Activated naive CD4-positive, alpha-beta T cell treated with anti-CD3 and anti-CD28 coated beads for 36 hours (primary cell): ENCODE measurements at regions of chr14 and their contacts with region 1.

Region 1: GRCh38 chr14:50520947-50521815 is 11.2 kb downstream of the MAP4K5 start:
- DNase-seq: peak; percentile 87
- H3K4me3 Mint-ChIP-seq: no peak overlapping the region
- H3K27ac Mint-ChIP-seq: peak overlapping the region; percentile 89
- H3K4me1 Mint-ChIP-seq: peaks cover 53% of the 10 kb centered on the region
- H3K27me3 Mint-ChIP-seq: no peaks in the 10 kb centered on the region

Region 2: DNA sequence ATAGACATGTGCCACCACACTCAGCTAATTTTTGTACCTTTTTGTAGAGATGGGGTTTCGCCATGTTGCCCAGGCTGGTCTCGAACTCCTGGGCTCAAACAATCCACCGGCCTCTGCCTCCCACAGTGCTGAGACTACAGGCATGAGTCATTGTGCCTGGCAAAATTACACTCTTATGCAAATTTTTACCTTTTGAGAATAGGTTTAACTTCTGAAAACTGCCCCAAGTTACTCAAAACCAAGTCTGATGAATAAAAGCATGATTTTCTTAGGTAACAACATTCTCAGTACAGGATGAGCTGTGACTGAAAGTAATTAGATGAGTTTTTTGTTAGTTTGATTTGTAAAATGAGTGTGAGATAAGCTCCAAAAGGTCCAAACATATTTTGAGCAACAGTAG is 1101.0 kb before region 1 on chr14:
- CTCF ChIA-PET with region 1: no interaction called
- intact Hi-C with region 1: loop called (anchors 2 kb)
- DNase-seq: peak; percentile 58
- H3K4me3 Mint-ChIP-seq: no peak overlapping the region
- H3K27ac Mint-ChIP-seq: peak overlapping the region; percentile 37
- H3K4me1 Mint-ChIP-seq: peaks cover 18% of the 10 kb centered on the region
- H3K27me3 Mint-ChIP-seq: peaks cover 41% of the 10 kb centered on the region

Region 3: GRCh38 chr14:49767562-49768300 is 753.5 kb before region 1 on chr14 and contains the start of gene KLHDC2:
- CTCF ChIA-PET with region 1: no interaction called
- intact Hi-C with region 1: loop called (anchors 5 kb)
- DNase-seq: peak; percentile 91
- H3K4me3 Mint-ChIP-seq: peak within 1 kb of the TSS; percentile 94
- H3K27ac Mint-ChIP-seq: peak within 1 kb of the TSS; percentile 99
- H3K4me1 Mint-ChIP-seq: peaks cover 34% of the 10 kb centered on the region
- H3K27me3 Mint-ChIP-seq: no peaks in the 10 kb centered on the region
- total RNA-seq, gene KLHDC2: 24.3 to 25.0 TPM

Region 4: GRCh38 chr14:50085570-50086320 is 435.4 kb before region 1 on chr14:
- CTCF ChIA-PET with region 1: no interaction called
- intact Hi-C with region 1: loop called (anchors 1 kb)
- DNase-seq: peak; percentile 77
- H3K4me3 Mint-ChIP-seq: peak overlapping the region; percentile 6
- H3K27ac Mint-ChIP-seq: peak overlapping the region; percentile 83
- H3K4me1 Mint-ChIP-seq: peaks cover 93% of the 10 kb centered on the region
- H3K27me3 Mint-ChIP-seq: no peaks in the 10 kb centered on the region

Region 5: GRCh38 chr14:50342221-50343078 is 178.7 kb before region 1 on chr14:
- CTCF ChIA-PET with region 1: interaction called, 6 read pairs
- intact Hi-C with region 1: loop called (anchors 1 kb)
- DNase-seq: peak; percentile 79
- H3K4me3 Mint-ChIP-seq: no peak overlapping the region
- H3K27ac Mint-ChIP-seq: no peak overlapping the region
- H3K4me1 Mint-ChIP-seq: peaks cover 26% of the 10 kb centered on the region
- H3K27me3 Mint-ChIP-seq: no peaks in the 10 kb centered on the region

Region 6: GRCh38 chr14:50452979-50453705 is 68.0 kb before region 1 on chr14:
- CTCF ChIA-PET with region 1: no interaction called
- intact Hi-C with region 1: loop called (anchors 1 kb)
- DNase-seq: no peak
- H3K4me3 Mint-ChIP-seq: no peak overlapping the region
- H3K27ac Mint-ChIP-seq: no peak overlapping the region
- H3K4me1 Mint-ChIP-seq: peaks cover 12% of the 10 kb centered on the region
- H3K27me3 Mint-ChIP-seq: no peaks in the 10 kb centered on the region

Region 7: GRCh38 chr14:50785457-50786063 is 264.4 kb after region 1 on chr14:
- CTCF ChIA-PET with region 1: no interaction called
- intact Hi-C with region 1: loop called (anchors 1 kb)
- DNase-seq: no peak
- H3K4me3 Mint-ChIP-seq: no peak overlapping the region
- H3K27ac Mint-ChIP-seq: no peak overlapping the region
- H3K4me1 Mint-ChIP-seq: peaks cover 66% of the 10 kb centered on the region
- H3K27me3 Mint-ChIP-seq: no peaks in the 10 kb centered on the region